Activated CD4-positive, alpha-beta memory T cell treated with anti-CD3 and anti-CD28 coated beads, Interleukin-2, amount 10 ng/mL, durations not matched to agents 7 days and 5 days (primary cell): ENCODE measurements at regions of chr7 and their contacts with region 1.

Region 1: DNA sequence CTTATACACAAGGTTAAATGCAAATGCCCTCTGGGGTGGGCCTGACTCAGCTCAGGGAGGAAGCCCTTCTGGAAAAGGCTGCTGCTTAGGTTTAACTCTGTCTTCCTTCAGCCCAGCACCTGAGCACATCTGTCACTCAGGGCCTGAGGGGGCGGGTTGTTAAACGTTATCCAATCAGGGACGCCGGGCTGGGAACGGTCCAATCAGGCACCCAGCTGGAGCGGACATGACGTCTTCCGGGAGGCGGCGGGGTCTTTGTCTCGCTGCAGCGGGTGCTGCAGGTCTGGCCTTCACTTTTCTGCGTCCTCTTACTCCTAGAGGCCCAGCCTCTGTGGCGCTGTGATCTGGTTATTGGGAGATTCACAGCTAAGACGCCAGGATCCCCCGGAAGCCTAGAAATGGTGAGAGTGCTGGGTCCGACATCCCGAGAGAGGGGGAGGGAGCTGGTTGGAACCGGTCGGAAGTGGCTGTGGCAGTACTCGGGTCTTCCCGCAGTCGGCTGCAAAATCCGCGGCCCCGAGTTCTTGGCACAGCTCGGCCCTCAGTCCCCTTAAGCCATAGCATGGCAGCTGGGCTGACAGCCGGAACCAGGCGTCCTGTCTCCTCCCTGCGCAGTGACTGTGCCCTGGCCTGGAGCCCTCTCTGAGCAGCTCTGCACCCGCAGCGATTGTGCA is at the start of gene ZNF138:
- DNase-seq: peak; percentile 95
- H3K4me3 Mint-ChIP-seq: peak within 1 kb of the TSS; percentile 97
- H3K27ac Mint-ChIP-seq: peak within 1 kb of the TSS; percentile 97
- H3K4me1 Mint-ChIP-seq: peaks cover 24% of the 10 kb centered on the region
- H3K27me3 Mint-ChIP-seq: no peaks in the 10 kb centered on the region
- total RNA-seq, gene ZNF138: 8.3 to 9.0 TPM

Region 2: GRCh38 chr7:64313740-64314491 is 480.4 kb before region 1 on chr7 and contains the start of gene ZNF736:
- CTCF ChIA-PET with region 1: no interaction called
- POLR2A ChIA-PET with region 1: interaction called, 14 read pairs
- DNase-seq: peak; percentile 91
- H3K4me3 Mint-ChIP-seq: peak within 1 kb of the TSS; percentile 97
- H3K27ac Mint-ChIP-seq: peak within 1 kb of the TSS; percentile 92
- H3K4me1 Mint-ChIP-seq: peaks cover 30% of the 10 kb centered on the region
- H3K27me3 Mint-ChIP-seq: no peaks in the 10 kb centered on the region
- total RNA-seq, gene ZNF736: 22.5 to 24.5 TPM

Region 3: GRCh38 chr7:64562626-64563275 is 231.6 kb before region 1 on chr7 and contains the start of gene ZNF680:
- CTCF ChIA-PET with region 1: no interaction called
- POLR2A ChIA-PET with region 1: interaction called, 14 read pairs
- DNase-seq: peak; percentile 92
- H3K4me3 Mint-ChIP-seq: peak within 1 kb of the TSS; percentile 99
- H3K27ac Mint-ChIP-seq: peak within 1 kb of the TSS; percentile 94
- H3K4me1 Mint-ChIP-seq: peaks cover 20% of the 10 kb centered on the region
- H3K27me3 Mint-ChIP-seq: no peaks in the 10 kb centered on the region
- total RNA-seq, gene ZNF680: 12.8 to 13.0 TPM

Region 4: DNA sequence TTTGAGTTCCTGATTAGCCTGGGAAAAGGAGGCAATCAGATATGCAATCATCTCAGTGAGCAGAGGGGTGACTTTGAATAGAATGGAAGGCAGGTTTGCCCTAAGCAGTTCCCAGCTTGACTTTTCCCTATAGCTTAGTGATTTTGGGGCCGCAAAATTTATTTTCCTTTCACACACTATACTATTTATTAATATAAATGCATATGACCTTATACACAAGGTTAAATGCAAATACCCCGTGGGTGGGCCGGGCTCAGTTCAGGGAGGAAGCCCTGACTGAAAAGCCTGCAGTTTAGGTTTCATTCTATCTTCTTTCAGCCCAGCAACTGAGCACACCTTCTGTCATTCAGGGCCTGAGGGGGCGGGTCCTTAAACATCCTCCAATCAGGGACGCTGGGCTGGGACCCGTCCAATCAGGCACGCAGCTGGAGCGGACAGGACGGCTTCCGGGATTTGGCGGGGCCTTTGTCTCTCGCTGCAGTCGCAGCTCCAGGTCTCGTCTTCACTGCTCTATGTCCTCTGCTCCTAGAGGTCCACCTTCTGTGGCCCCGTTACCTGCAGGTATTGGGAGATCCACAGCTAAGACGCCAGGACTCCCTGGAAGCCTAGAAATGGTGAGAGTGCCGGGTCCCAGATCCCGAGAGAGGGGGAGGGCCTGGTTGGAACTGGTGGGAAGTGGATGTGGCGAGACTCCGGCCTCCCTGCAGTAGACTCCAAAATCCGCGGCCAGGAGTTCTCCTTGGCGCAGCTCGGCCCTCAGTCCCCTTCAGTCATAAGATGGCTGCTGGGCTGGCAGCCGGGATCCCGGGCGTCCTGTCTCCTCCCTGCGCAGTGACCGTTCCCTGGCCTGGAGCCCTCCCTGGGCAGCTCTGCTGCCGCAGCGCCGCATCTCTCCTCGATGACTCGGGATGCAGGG is 108.8 kb after region 1 on chr7 and contains the start of gene ZNF273:
- CTCF ChIA-PET with region 1: no interaction called
- POLR2A ChIA-PET with region 1: interaction called, 26 read pairs
- DNase-seq: peak; percentile 94
- H3K4me3 Mint-ChIP-seq: peak within 1 kb of the TSS; percentile 94
- H3K27ac Mint-ChIP-seq: peak within 1 kb of the TSS; percentile 92
- H3K4me1 Mint-ChIP-seq: peaks cover 46% of the 10 kb centered on the region
- H3K27me3 Mint-ChIP-seq: no peaks in the 10 kb centered on the region
- total RNA-seq, gene ZNF273: 8.4 to 10.5 TPM

Region 5: DNA sequence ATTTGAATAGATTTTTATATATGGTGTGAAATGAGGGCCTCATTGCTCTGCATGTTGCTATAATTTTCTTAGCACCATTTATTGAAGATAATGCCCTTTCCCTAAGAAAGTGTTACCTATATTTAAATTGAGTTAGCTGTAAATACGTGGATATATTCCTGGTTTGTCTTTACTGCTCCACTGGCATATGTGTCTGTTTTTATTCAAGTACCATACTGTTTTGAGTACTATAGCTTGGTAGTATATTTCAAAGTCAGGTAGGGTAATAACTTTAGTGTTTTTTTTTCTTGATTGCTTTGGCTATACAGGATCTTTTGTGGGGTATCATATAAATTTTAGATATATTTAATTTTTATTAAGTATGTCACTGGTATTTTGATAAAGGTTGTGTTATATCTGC is 140.2 kb after region 1 on chr7:
- CTCF ChIA-PET with region 1: no interaction called
- POLR2A ChIA-PET with region 1: no interaction called
- DNase-seq: no peak
- H3K4me3 Mint-ChIP-seq: no peak overlapping the region
- H3K27ac Mint-ChIP-seq: no peak overlapping the region
- H3K4me1 Mint-ChIP-seq: no peaks in the 10 kb centered on the region
- H3K27me3 Mint-ChIP-seq: no peaks in the 10 kb centered on the region

Region 6: DNA sequence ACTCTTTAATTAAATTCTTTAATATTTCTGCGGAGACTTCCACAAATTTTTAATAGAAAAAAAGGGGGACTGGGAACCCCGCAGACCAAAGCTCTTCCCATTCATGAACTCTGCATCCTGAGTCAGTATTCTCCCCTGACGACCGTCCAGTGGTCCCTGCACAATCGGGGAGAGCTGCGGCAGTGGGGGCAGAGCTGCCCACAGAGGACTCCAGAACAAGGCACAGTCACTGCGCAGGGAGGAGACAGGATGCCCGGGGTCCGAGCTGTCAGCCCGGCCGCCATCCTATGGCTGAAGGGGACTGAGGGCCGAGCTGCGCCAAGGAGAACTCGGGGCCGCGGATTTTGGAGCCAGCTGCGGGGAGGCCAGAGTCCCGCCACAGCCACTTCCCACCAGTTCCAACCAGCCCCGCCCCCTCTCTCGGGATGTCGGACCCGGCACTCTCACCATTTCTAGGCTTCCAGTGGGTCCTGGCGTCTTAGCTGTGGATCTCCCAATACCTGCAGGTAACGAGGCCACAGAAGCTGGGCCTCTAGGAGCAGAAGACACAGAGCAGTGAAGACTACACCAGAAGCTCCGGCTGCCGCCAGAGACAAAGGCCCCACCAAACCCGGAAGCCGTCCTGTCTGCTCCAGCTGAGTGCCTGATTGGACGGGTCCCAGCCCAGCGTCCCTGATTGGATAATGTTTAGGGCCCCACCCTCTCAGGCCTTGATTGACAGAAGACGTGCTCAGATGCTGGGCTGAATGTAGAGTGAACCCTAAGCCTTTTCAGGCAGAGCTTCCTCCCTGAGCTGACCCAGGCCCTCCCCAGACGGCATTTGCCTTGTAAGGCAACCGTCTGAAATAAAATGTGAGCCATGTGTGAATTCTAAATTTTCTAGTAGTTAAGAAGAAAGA is 212.0 kb after region 1 on chr7 and contains the start of gene ERV3-1:
- CTCF ChIA-PET with region 1: no interaction called
- POLR2A ChIA-PET with region 1: interaction called, 13 read pairs
- DNase-seq: peak; percentile 94
- H3K4me3 Mint-ChIP-seq: peak within 1 kb of the TSS; percentile 91
- H3K27ac Mint-ChIP-seq: peak within 1 kb of the TSS; percentile 72
- H3K4me1 Mint-ChIP-seq: peaks cover 29% of the 10 kb centered on the region
- H3K27me3 Mint-ChIP-seq: no peaks in the 10 kb centered on the region
- total RNA-seq, gene ERV3-1: 9.6 to 14.4 TPM

Region 7: GRCh38 chr7:65373608-65374351 is 579.5 kb after region 1 on chr7 and contains the start of gene ZNF92:
- CTCF ChIA-PET with region 1: no interaction called
- POLR2A ChIA-PET with region 1: interaction called, 10 read pairs
- DNase-seq: peak; percentile 98
- H3K4me3 Mint-ChIP-seq: peak within 1 kb of the TSS; percentile 87
- H3K27ac Mint-ChIP-seq: peak within 1 kb of the TSS; percentile 92
- H3K4me1 Mint-ChIP-seq: peaks cover 41% of the 10 kb centered on the region
- H3K27me3 Mint-ChIP-seq: no peaks in the 10 kb centered on the region
- total RNA-seq, gene ZNF92: 19.7 to 21.6 TPM